Pancreas (tissue), 10 donors: ENCODE measurements at regions of chr5 and their contacts with region 1.

Region 1: DNA sequence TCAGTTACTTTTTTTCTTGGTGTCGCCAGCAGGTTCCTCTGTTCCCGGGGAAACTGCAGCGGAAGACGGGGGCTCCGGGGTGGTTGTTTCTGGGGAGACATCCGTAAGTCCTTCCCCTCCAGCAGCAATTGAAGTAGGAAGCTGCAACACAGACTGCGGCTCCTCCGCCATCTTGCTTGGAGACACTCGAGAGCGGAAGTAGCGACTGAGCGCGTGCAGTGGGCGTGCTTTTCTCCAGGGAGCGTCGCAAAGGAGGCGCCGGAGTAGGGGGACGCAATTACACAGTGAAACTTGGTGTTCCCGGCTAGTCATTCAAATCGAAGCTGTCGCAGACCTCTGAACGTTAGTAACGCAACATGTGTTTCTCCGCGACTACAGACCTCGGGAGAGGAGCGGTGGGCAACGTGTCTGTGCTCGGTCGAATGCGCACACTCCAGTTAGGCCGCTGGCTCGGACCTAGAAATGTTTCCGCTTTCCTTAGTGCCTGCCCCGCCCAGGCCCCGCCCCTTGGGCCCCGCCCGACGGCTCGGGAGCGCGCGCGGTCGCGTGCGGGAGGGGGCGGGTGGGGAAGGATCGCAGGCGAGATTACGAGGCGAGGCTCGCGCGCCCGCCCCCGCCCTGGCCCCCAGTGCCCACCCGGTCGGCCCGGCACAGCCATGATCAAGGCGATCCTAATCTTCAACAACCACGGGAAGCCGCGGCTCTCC is at the starts of genes AP3S1 and ATG12:
- DNase-seq: peak; percentile 87 to 93 (median 90)
- ATAC-seq: peak; percentile 92 to 97 (median 92)
- H3K4me3 ChIP-seq: peak within 1 kb of the TSS; percentile 94 to 98 (median 96)
- H3K27ac ChIP-seq: peak within 1 kb of the TSS; percentile 90 to 95 (median 92)
- H3K4me1 ChIP-seq: peaks cover 15 to 41% (median 26%) of the 10 kb centered on the region in 3 donors
- H3K27me3 ChIP-seq: no peaks in the 10 kb centered on the region
- CTCF ChIP-seq: no peak
- total RNA-seq, gene AP3S1: 40.6 to 58.4 (median 52.5) TPM
- total RNA-seq, gene ATG12: 13.0 to 21.5 (median 14.6) TPM

Region 2: GRCh38 chr5:115634343-115635132 is 207.0 kb before region 1 on chr5:
- intact Hi-C with region 1: loop called in 1 of 3 experiments (anchors 5 kb)
- DNase-seq: peak; percentile 80 to 92 (median 87)
- ATAC-seq: peak; percentile 95 to 99 (median 99)
- H3K4me3 ChIP-seq: peak overlapping the region in 3 of 4 donors; percentile 14 to 22 (median 15)
- H3K27ac ChIP-seq: peak overlapping the region in 3 of 4 donors; percentile 2 to 84 (median 67)
- H3K4me1 ChIP-seq: no peaks in the 10 kb centered on the region
- H3K27me3 ChIP-seq: no peaks in the 10 kb centered on the region
- CTCF ChIP-seq: peak; percentile 68 to 88 (median 80)

Region 3: GRCh38 chr5:116953251-116953930 is 1111.9 kb after region 1 on chr5:
- intact Hi-C with region 1: no loop called
- DNase-seq: no peak
- ATAC-seq: no peak
- H3K4me3 ChIP-seq: no peak overlapping the region
- H3K27ac ChIP-seq: no peak overlapping the region
- H3K4me1 ChIP-seq: no peaks in the 10 kb centered on the region
- H3K27me3 ChIP-seq: no peaks in the 10 kb centered on the region
- CTCF ChIP-seq: no peak